ENCODE measurements at regions of chr4 and their contacts with region 1.

Region 1: GRCh38 chr4:15001869-15002658 is at the start of gene CPEB2:
- DNase-seq: peak; percentile 94
- H3K4me3 ChIP-seq: peak within 1 kb of the TSS; percentile 63 to 98 (median 72)
- H3K27ac ChIP-seq: peak within 1 kb of the TSS; percentile 89
- H3K4me1 ChIP-seq: peaks cover 3% of the 10 kb centered on the region
- H3K27me3 ChIP-seq: no peaks in the 10 kb centered on the region
- CTCF ChIP-seq: no peak
- total RNA-seq, gene CPEB2: 16.1 to 21.5 TPM

Region 2: GRCh38 chr4:13627606-13628301 is 1374.3 kb before region 1 on chr4 and contains the start of gene BOD1L1:
- CTCF ChIA-PET with region 1: no interaction called
- dilution Hi-C with region 1: no loop called
- in situ Hi-C with region 1: loop called in 1 of 2 experiments (anchors 25 kb)
- intact Hi-C with region 1: loop called (anchors 10 kb)
- DNase-seq: peak; percentile 90
- H3K4me3 ChIP-seq: peak within 1 kb of the TSS; percentile 74 to 88 (median 77)
- H3K27ac ChIP-seq: peak within 1 kb of the TSS; percentile 89
- H3K4me1 ChIP-seq: peaks cover 3% of the 10 kb centered on the region
- H3K27me3 ChIP-seq: no peaks in the 10 kb centered on the region
- CTCF ChIP-seq: peak in 1 of 2 donors; percentile 61
- total RNA-seq, gene BOD1L1: 22.5 to 38.3 TPM

Region 3: DNA sequence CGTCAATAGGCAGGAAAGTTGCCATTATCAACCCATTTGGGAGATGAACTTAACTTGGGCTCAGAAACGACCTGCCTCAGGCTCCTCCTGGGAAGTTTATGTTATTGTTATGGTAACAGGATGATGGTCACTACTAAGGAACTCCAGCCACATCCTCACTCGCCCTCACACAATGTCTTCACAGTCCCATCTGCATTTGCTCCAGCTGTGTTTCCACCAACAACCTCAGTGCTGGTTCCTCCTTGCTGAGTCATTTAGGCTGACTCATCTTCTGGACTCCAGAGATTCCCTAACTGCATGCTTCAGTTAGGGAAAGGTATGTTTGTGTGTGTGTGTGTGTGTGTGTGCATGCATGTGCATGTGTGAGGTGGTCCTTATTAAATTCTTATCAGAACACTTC is 1081.2 kb before region 1 on chr4:
- CTCF ChIA-PET with region 1: no interaction called
- dilution Hi-C with region 1: no loop called
- in situ Hi-C with region 1: no loop called
- intact Hi-C with region 1: loop called (anchors 10 kb)
- DNase-seq: peak; percentile 100
- H3K4me3 ChIP-seq: no peak overlapping the region
- H3K27ac ChIP-seq: peak overlapping the region; percentile 100
- H3K4me1 ChIP-seq: peaks cover 52% of the 10 kb centered on the region
- H3K27me3 ChIP-seq: no peaks in the 10 kb centered on the region
- CTCF ChIP-seq: no peak

Region 4: GRCh38 chr4:14749910-14750309 is 252.2 kb before region 1 on chr4:
- CTCF ChIA-PET with region 1: no interaction called
- dilution Hi-C with region 1: no loop called
- in situ Hi-C with region 1: no loop called
- intact Hi-C with region 1: loop called (anchors 1 kb)
- DNase-seq: peak; percentile 47
- H3K4me3 ChIP-seq: no peak overlapping the region
- H3K27ac ChIP-seq: no peak overlapping the region
- H3K4me1 ChIP-seq: no peaks in the 10 kb centered on the region
- H3K27me3 ChIP-seq: no peaks in the 10 kb centered on the region
- CTCF ChIP-seq: peak; percentile 41 to 76

Region 5: GRCh38 chr4:14856076-14856933 is 145.8 kb before region 1 on chr4:
- CTCF ChIA-PET with region 1: no interaction called
- dilution Hi-C with region 1: no loop called
- in situ Hi-C with region 1: no loop called
- intact Hi-C with region 1: loop called (anchors 1 kb)
- DNase-seq: peak; percentile 100
- H3K4me3 ChIP-seq: no peak overlapping the region
- H3K27ac ChIP-seq: peak overlapping the region; percentile 90
- H3K4me1 ChIP-seq: peaks cover 23% of the 10 kb centered on the region
- H3K27me3 ChIP-seq: no peaks in the 10 kb centered on the region
- CTCF ChIP-seq: no peak

Region 6: DNA sequence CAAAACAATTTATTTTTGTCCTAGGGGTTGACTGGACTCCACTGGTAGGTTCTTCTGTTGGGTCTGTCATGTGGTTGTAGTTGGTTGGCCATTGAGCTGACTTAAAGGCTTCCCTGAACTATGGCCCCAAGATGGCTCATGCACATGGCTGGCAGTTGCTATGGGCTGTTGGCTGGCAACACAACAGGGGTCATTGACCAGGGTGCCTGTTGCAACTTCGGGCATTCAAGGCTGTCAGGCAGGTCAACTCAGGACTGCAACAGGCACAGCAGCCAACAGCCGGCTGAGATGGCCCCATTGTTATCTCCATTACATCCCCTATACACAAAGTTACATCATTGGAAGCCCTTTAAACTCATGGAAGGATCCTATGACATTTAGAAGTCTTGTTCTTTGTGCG is 109.5 kb before region 1 on chr4:
- CTCF ChIA-PET with region 1: no interaction called
- dilution Hi-C with region 1: no loop called
- in situ Hi-C with region 1: no loop called
- intact Hi-C with region 1: loop called (anchors 5 kb)
- DNase-seq: no peak
- H3K4me3 ChIP-seq: no peak overlapping the region
- H3K27ac ChIP-seq: no peak overlapping the region
- H3K4me1 ChIP-seq: peaks cover 18% of the 10 kb centered on the region
- H3K27me3 ChIP-seq: no peaks in the 10 kb centered on the region
- CTCF ChIP-seq: no peak